Posterior vena cava (tissue), 2 donors: ENCODE measurements at regions of chr11 and their contacts with region 1.

Region 1: GRCh38 chr11:13169709-13170108 is 107.9 kb upstream of the BMAL1 start:
- DNase-seq: no peak

Region 2: DNA sequence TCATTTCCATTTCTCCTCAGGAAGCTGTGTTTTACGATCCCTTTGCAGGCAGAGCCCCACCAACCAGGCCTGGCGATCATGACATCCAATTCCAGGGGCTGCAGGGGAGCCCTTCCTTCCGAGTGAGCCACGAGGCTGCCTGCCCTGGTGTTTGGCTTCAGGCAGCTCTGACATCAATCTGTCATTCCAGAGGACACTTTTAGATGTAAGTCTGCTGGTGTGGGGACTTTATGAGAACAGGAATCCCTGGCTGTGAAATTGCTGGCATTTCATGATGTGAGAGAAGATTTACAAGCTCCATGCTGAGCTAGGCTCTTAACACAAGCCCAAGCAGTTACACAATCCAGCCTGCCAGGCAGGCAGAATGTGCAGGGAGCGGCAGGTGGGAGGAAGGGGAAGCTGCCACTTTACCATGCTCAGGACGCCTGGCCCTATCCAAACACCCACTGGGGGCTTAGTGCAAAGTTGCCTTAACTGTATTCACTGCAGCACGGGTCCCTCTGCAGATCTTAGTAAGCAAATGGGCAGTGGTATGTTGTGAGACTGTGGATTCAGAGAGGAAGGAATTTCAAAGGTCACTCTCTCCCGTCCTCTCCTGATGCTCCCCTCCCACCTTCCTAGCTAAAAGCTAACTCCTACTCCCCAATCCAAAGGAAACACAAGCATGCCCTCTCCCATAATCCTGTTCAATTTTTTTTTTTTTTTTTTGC is 1102.8 kb before region 1 on chr11:
- intact Hi-C with region 1: loop called in 1 of 2 experiments (anchors 5 kb)
- DNase-seq: no peak

Region 3: DNA sequence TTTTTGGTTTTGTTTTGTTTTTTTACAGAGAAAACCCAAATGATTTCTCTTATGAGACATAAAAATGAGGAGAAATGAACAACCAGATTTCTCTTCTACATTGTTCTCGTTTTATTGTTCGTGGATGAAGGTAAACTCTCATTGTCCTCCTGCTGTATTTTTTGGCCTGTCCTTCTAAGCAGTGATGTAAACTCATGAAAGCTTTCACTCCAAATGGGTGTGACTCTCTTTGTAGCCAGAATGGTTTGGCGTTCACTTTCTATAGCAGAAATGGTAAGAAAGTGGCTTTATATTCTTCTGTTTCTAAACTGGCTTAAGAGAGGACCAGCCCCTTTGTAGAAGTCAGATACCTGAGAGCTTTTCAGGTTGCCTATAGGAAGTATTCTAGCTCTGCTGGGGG is 92.4 kb after region 1 on chr11:
- intact Hi-C with region 1: no loop called
- DNase-seq: no peak